GM13976 (cell line): ENCODE measurements at regions of chr1 and their contacts with region 1.

Region 1: DNA sequence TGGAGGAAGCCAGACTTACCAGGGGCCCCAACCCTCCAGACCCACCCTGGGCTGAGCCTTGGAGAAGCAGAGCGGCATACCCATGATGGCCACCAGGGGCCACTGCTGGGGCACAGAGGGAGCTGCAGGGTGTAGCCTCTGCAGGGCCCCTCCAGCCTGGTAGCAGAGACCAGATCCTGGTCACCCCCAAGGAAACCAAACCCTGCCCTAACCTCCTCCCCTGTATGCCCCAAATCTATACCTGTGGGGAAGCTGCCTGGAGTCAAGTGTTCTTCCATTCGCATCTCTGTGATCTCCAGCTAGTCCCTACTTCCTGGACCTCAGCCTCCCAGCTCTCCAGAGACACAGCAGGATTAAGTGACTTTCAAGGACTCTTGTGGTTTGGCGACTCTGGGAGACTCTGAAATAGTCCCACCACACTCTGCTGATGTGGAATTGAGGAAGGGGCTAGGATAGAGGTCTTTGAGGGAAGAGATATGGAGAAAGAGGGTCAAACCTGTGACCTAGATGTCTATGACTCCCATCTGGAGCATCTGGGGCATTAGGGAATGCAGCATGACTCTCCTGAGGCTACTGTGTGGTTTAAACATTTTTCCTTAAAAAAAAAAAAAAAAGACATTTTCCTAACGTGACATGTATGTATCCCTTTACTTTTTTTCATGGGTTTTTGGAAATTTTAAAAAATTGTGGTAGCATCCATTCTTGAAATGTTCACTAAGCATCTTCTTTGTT is 119.2 kb upstream of the IPO9 start:
- DNase-seq: peak; percentile 82
- CTCF ChIP-seq: peak; percentile 90

Region 2: GRCh38 chr1:201783572-201783971 is 73.8 kb after region 1 on chr1:
- in situ Hi-C with region 1: loop called (anchors 10 kb)
- DNase-seq: no peak
- CTCF ChIP-seq: no peak